ENCODE measurements at regions of chr7 and their contacts with region 1.

Region 1: DNA sequence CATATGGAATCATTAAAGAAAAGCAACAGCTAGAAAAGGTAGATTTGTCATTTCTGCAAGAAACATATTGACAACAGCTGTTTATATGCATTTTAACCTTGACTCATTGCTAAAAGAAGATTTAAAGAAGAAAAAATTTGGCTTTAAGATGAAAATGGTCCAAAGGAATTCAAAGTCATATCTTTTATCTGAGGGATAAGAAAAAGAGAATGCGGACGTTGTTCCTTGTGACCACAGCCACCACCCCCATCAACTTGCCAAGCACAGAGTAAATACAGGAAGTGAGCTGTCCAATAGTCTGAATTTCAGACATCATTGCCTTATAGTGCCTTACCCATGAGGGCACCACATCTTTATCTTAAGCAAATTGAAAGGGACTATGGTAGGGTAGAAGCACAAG is 7.3 kb upstream of the CRPPA start:
- DNase-seq: peak in 1 of 2 experiments; percentile 67
- H3K4me3 ChIP-seq: no peak overlapping the region
- H3K27ac ChIP-seq: no peak overlapping the region
- H3K4me1 ChIP-seq: no peaks in the 10 kb centered on the region
- H3K27me3 ChIP-seq: no peaks in the 10 kb centered on the region
- CTCF ChIP-seq: no peak

Region 2: DNA sequence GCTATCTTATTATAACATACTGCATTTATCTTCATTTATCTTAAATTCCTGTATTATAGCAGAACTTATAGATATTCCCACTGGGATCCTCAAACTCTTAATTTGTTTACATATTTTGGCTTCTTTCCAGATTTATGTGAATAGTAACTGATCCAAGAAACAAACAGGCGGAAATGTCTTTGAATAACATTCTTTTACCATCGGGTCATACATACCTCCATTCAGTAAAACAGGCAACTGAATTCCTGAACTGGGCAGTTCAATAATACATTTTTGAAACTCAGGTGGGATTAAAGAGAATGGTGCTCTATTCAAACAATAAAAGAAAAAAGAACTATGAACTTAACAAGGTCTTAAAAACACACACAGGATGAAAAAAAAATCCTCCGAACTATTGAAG is 344.7 kb before region 1 on chr7:
- CTCF ChIA-PET with region 1: no interaction called
- POLR2A ChIA-PET with region 1: interaction called, 10 read pairs
- intact Hi-C with region 1: no loop called
- DNase-seq: peak in 1 of 2 experiments; percentile 81
- H3K4me3 ChIP-seq: no peak overlapping the region
- H3K27ac ChIP-seq: peak overlapping the region; percentile 3; the same call in 1 of the 2 replicates
- H3K4me1 ChIP-seq: peaks cover 15% of the 10 kb centered on the region
- H3K27me3 ChIP-seq: no peaks in the 10 kb centered on the region
- CTCF ChIP-seq: no peak

Region 3: GRCh38 chr7:16492513-16493062 is 63.9 kb after region 1 on chr7:
- CTCF ChIA-PET with region 1: no interaction called
- POLR2A ChIA-PET with region 1: no interaction called
- intact Hi-C with region 1: loop called (anchors 5 kb)
- DNase-seq: peak in 1 of 2 experiments; percentile 54
- H3K4me3 ChIP-seq: no peak overlapping the region
- H3K27ac ChIP-seq: no peak overlapping the region
- H3K4me1 ChIP-seq: no peaks in the 10 kb centered on the region
- H3K27me3 ChIP-seq: no peaks in the 10 kb centered on the region
- CTCF ChIP-seq: no peak

Region 4: DNA sequence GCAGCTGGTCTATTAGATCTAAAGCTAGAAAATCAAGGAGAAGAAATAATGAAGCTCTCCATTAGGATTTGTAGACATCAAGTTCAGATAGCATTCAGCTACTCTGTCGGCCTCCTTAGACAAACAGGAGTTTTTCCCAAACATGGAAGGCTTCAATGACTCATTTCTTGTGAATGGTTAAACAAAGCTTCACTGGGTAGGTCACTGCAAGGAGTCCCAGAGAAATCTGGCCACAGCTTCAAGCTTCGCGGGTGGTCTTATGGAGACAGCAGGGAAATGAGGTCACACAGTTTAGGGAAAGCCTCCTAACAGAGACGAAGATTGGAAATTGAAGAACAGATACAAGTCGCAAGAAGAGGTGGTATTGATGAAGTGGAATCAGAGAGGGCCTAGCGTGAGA is 75.3 kb after region 1 on chr7:
- CTCF ChIA-PET with region 1: no interaction called
- POLR2A ChIA-PET with region 1: no interaction called
- intact Hi-C with region 1: no loop called
- DNase-seq: no peak
- H3K4me3 ChIP-seq: no peak overlapping the region
- H3K27ac ChIP-seq: no peak overlapping the region
- H3K4me1 ChIP-seq: no peaks in the 10 kb centered on the region
- H3K27me3 ChIP-seq: no peaks in the 10 kb centered on the region
- CTCF ChIP-seq: no peak

Measured in PC-9 (cell line).